Kidney (tissue), 22 donors: ENCODE measurements at regions of chr9 and their contacts with region 1.

Region 1: DNA sequence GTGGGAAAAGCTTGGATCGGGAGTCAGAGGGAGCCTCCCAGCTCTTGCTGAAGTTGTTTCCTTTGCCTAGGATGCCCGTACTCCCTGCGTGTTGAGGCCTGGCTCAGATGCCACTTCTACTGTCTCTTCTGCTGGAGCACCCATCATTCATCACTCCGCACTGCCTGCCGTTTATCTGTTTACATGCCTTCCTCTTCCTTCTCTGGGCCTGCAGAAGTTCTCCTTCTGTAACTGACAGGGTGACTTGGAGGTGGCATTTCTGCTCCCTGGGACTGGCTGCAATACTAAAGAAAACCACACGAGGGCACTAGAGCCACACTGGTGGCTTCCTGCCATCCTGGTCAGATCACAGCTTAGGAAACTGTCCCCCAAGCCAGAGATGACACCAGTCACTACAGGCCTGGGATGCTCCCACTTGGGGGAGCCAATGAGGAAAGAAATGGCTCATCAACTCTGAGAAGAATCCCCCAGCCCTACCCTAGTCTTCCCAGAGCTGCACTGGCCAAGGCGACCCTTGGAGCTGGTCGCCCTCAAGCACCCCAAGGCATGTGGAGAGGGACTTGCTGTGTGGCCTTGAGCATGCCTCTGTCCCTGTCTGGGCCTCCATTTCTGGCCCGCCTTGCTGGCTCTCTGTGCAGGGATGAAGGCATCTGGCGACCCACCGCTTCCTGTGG is 9.7 kb upstream of the SLC25A51 start:
- DNase-seq: peak in 4 of 5 donors; percentile 92 to 94 (median 93)
- H3K4me3 ChIP-seq: no peak overlapping the region
- H3K27ac ChIP-seq: peak overlapping the region in 1 of 2 donors; percentile 7
- H3K4me1 ChIP-seq: peaks cover 0 to 14% (median 7%) of the 10 kb centered on the region in 3 donors
- H3K27me3 ChIP-seq: no peaks in the 10 kb centered on the region
- CTCF ChIP-seq: peak; percentile 99

Region 2: DNA sequence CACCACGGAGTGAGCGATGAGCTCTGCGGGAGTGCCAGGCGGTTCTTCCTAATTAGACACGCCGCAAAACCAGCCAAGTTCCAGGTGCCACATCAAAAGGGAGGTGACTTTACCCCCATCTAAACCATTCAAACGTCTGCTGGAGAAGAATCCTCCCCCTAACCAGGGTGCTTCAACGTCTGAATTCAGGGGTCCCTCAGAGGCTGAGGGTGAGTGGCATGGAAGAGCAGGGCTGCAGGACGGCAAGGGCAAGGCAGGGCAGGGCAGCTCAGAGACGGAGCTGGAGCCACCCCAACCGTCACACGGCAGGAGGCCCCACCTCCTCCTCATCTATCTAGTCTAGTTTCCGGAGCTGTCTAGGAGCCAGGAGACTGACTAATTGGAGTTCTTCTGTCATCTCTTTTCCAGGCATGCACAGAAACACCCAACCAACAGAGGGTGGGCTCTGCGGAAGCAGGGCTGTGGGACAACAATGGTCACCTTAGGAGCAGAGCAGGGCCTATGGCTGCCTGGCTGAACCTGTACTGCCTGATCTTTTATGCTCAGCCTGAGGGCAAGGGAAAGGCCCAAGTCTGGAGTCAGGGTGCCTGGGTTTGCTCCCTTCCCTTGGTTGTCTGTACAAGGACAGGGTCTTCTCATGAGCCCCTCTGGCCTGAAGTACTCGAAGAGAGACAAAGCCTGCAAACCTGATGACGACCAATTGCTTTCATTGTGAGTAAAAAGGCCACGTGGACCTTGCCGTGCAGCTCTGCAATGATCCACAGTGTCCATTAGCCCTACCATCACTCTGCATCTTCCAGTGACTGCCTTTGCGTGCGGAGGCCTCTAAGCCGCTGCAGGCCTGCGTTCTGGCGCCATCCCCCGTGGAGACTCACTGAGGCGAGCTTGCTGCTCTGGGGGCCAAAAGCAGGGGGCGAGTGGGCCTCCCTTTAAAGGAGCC is 71.3 kb after region 1 on chr9:
- intact Hi-C with region 1: loop called (anchors 10 kb)
- DNase-seq: peak in 2 of 5 donors; percentile 59 to 65
- H3K4me3 ChIP-seq: no peak overlapping the region
- H3K27ac ChIP-seq: no peak overlapping the region
- H3K4me1 ChIP-seq: peaks cover 0 to 19% (median 18%) of the 10 kb centered on the region in 3 donors
- H3K27me3 ChIP-seq: no peaks in the 10 kb centered on the region
- CTCF ChIP-seq: no peak

Region 3: GRCh38 chr9:38362852-38363593 is 449.4 kb after region 1 on chr9:
- intact Hi-C with region 1: loop called (anchors 10 kb)
- DNase-seq: peak in 4 of 5 donors; percentile 57 to 89 (median 68)
- H3K4me3 ChIP-seq: no peak overlapping the region
- H3K27ac ChIP-seq: no peak overlapping the region
- H3K4me1 ChIP-seq: peaks cover 0 to 13% (median 10%) of the 10 kb centered on the region in 3 donors
- H3K27me3 ChIP-seq: no peaks in the 10 kb centered on the region
- CTCF ChIP-seq: peak; percentile 72